GM10248 (cell line): ENCODE measurements at regions of chr13 and their contacts with region 1.

Region 1: DNA sequence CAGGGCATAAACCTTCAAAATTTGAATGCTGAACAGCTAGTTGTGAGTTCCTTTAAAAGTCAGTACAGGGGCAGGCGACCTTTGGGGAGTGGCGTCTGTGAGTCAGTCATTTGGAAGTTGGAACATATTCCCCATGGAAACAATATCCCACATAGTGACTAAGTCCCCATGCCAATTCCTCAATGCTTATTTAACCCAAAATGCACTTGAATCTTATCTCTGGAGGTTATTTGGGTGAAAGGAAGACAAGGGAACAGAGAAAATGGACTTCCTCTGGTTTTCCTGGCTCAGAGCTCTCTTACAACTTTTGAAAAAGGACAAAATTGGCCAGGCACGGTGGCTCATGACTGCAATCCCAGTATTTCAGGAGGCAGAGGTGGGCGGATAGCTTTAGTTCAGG is 479.2 kb upstream of the NBEA start:
- DNase-seq: no peak
- CTCF ChIP-seq: no peak

Region 2: DNA sequence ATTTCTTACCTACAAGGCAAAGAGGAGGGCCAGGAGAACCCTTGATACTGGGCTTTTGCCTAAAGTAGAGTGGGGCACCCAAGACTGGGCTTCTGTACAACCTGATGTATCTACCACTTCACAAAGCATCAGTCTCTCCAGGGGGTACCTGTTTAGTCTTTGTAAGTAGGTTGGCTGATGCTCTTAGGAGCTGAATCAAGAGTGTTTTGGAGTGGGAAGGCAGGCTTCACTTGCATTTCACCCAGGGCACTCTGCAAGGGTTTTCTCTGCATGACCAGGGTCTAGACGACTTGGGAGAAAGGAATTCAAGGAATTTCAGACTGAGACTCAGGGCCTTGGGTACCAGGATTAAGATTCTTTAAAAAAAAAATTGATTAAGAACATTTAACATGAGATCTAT is 283.4 kb before region 1 on chr13:
- CTCF ChIA-PET with region 1: no interaction called
- POLR2A ChIA-PET with region 1: no interaction called
- DNase-seq: no peak
- CTCF ChIP-seq: no peak

Region 3: GRCh38 chr13:34294483-34295129 is 168.2 kb before region 1 on chr13:
- CTCF ChIA-PET with region 1: no interaction called
- POLR2A ChIA-PET with region 1: no interaction called
- DNase-seq: no peak
- CTCF ChIP-seq: no peak

Region 4: DNA sequence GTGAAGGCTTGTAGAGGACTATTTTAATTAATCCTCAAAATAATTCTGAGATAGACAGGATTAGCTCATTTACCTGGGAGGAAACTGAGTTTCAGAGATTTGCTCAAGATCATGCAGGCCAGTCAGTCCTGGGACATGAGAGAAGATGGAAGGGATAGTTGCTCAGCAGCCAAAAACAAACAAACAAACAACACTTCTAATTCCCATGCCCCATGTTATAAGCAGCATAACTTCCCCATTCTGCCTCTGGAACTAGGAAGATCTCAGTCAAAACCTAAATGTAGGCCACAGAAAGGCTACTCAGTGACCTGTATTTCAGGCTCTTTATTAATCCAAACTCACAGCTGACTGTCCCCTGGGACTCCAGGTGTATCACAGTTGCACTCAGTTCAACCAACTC is 10.0 kb before region 1 on chr13:
- CTCF ChIA-PET with region 1: interaction called, 13 read pairs
- POLR2A ChIA-PET with region 1: no interaction called
- DNase-seq: no peak
- CTCF ChIP-seq: no peak